ENCODE measurements at regions of chr17 and their contacts with region 1.

Region 1: GRCh38 chr17:50478391-50479381 is at the start of gene RSAD1:
- DNase-seq: peak; percentile 91
- ATAC-seq: peak; percentile 90 to 91
- total RNA-seq, gene RSAD1: 31.6 to 38.8 TPM

Region 2: DNA sequence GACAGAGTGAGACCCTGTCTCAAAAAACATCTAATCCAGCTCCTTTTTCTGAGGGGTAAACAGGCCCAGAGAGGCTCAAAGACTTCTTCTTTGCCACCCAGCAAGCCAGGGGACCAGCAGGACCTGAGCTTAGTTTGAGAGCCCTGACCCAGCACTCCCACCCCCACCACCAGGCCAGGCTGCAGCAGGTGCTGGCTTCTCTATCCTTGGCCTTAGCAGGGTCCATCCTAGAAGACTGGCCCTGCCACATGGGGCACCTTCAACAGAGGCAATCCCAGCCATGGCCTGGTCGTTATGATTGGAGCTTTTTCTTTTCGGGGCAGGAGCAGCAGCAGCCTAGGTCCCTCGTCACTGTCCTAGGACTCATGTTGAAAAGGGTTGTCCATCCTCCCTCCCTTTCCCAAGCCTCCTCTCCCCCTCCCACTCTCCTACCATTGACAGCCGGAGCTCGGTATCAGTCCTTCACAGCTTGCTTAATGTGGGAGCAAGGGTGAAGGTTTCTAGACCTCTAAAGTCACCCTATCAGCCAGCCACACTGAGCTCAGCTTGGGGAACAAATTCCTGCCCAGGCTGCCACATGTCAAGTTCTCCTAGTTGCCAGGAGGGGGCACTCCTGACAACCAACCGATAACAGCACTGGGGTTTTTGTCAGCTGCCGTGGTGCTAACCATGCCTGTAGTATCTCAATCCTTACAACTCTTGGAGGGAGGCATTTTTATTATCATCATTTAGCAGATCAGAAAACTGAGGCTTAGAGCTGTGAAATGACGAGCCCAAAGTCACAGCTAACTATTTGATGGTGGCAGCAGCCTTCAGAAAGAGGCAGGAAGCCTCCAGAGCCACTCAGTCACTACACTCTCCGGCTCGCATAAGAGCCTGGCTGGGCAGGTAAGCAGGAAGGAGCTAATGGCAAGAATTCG is 116.9 kb before region 1 on chr17:
- intact Hi-C with region 1: loop called in 1 of 2 experiments (anchors 2 kb)
- DNase-seq: peak; percentile 58
- ATAC-seq: peak; percentile 51 to 56

Region 3: DNA sequence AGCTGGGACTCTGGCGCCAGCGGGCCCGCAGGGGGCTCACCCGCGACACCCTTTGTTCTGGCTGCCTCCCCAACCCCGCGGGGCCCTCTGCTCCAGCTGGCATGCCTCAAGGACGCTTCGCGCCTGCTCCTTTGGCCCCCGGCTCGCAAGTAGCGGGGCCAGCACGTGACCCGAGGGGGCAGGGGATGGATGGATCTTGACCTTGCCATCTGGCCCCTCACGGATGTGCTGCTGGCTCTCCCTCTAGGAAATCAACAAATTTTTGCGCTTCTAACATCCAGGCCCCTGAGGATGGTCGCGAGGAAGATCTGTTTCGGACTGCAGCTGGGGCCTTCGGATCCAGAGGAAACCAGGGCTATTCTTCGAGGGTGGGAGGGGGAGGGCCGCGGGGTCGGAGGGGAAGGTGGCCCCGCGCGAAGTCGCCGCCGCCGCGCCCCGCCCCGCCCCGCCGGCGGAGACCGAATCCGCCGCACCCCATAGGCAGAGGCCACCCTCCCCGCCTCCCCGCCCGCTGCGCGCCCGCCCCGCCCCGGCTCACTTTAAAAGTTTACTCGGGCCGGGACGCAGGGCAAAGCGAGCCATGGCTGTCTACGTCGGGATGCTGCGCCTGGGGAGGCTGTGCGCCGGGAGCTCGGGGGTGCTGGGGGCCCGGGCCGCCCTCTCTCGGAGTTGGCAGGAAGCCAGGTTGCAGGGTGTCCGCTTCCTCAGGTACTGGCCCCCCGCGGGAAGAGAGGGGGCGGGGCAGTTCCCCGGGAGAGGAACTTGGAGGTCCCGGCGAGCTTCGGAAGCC is 52.8 kb before region 1 on chr17 and contains the start of gene ACSF2:
- intact Hi-C with region 1: loop called in 1 of 2 experiments (anchors 5 kb)
- DNase-seq: peak; percentile 81
- ATAC-seq: peak; percentile 87 to 92
- total RNA-seq, gene ACSF2: 64.8 to 66.4 TPM

Region 4: DNA sequence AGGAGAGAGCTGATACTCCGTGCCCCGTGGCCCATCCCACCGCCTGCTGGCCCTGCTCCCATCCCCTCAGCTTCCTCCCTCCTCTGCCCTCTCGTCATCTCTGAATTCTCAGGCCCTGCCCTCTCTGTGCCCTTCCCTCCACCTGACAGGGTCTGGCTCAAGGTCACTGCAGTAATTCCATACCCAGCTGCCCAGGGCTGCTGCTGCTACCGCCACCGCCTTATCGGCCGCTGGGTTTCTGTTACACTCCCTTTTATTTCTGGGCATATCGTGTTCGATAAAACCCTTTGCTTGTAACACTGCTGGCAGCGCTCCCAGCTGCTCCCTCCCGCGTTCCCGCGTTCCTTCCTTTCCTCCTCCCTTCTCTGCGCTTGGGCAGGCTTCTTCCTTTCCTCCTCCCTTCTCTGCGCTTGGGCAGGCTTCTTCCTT is 55.0 kb after region 1 on chr17:
- intact Hi-C with region 1: loop called in 1 of 2 experiments (anchors 2 kb)
- DNase-seq: peak; percentile 79
- ATAC-seq: peak; percentile 62 to 74

Region 5: DNA sequence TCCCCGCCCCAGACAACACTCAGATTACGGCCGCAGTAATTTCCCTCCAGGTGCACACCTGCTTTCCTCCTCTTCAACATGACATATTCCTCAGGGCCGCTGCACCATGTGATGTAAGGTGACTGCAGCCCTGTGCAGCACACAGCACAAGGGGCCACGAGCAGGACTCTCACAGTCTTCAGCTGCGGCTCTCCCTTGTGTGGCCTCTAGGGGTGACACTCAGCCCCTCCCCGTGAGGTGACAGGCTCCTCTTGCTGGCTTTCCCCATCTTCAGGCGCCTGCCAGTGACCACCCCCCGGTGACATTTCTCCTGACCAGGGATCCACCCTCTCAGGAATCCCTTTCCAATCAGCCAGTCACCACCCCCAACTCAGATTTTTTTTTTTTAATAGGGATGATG is 124.7 kb after region 1 on chr17:
- intact Hi-C with region 1: no loop called
- DNase-seq: no peak
- ATAC-seq: no peak

Region 6: GRCh38 chr17:50626037-50626574 is 147.4 kb after region 1 on chr17:
- intact Hi-C with region 1: loop called (anchors 5 to 10 kb)
- DNase-seq: peak; percentile 81
- ATAC-seq: peak; percentile 77 to 86

Region 7: DNA sequence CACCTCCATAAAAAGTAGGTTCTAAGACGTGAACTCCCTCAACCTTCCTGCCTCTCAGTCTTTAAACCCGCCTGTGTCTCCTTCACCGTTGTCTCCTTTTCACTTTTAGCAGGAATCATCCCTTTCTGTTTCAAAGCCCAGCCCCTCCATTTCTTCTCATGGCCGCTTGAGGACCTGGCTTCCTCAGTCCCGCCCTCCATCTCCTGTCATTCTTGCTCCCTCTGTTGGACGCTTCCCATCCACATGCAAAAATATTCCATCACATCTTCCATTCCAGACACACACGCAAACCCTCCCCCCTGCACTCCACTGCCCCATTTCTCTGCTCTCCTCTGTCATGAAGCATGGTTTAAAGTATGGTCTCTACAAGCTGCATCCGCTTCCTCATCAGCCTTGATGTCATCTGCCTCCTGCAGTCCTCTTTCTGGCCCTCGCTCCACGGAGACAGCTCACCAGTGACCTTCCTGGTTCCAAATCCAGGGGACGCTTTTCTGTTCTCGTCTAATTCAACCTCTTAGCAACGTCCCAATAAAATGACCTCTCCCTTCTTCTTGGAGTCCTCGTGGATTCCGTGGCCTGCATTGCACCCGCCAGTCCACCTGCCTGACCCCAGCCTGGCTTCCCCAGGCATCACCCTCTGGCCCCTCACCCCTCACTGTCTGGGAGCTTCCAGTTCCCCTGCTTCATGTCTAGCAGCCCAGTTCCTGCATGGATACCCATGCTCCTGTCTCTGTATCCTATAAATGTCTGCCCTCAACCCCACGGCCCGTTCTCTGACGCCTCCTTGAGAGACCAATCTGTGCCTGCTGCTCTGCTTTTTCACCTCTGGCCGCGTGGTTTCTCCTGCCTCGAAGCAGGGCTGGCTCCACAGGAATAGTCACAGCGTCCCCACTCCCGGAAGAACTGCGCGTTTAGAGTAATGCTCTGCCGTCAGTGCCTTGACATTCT is 202.9 kb after region 1 on chr17:
- intact Hi-C with region 1: loop called in 1 of 2 experiments (anchors 5 kb)
- DNase-seq: peak; percentile 58
- ATAC-seq: peak; percentile 75 to 79